CD8-positive, alpha-beta memory T cell (primary cell): ENCODE measurements at regions of chr15 and their contacts with region 1.

Region 1: DNA sequence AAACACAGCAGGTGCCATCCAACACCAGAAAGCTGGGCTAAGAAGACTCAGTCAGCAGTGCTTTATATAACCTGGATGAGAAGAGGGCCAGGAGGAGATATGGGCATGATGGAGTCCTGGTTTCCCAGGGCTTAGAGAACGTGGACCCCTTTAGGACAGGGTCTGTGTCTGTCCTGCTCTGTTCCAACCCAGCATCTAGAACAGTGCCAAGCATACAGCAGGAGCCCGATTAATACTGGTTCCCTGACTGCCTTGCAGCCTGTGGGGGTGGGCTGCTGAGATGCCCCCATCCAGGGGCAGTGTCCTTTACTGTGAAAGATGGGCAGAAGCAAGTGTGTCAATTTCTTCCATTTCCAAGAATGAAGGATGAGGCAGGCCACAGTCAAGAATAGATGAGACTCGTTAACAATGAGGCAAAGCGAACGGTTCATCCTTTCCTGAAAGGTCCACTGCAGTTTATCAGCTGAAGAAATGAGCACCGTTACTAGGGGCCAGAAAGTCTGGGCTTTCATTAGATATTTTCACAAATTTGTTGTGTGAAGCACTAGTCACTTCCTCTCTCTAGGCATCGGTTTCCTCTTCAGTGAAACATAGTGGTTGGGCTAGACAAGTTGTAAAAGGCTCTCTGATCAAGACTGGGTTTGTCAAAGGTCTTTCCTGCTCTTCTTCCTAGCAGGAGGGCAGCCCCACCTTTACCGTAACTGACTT is 72.0 kb upstream of the HERC1 start:
- DNase-seq: peak in 2 of 5 donors; percentile 25 to 32
- H3K4me3 ChIP-seq: no peak overlapping the region
- H3K4me3 Mint-ChIP-seq: peak overlapping the region in 6 of 7 donors; percentile 56 to 75 (median 60)
- H3K27ac ChIP-seq: no peak overlapping the region
- H3K27ac Mint-ChIP-seq: peak overlapping the region; percentile 77 to 97 (median 94)
- H3K4me1 ChIP-seq: peaks cover 25% of the 10 kb centered on the region
- H3K4me1 Mint-ChIP-seq: peaks cover 23 to 33% (median 29%) of the 10 kb centered on the region in 3 donors
- H3K27me3 ChIP-seq: no peaks in the 10 kb centered on the region
- H3K27me3 Mint-ChIP-seq: no peaks in the 10 kb centered on the region

Region 2: DNA sequence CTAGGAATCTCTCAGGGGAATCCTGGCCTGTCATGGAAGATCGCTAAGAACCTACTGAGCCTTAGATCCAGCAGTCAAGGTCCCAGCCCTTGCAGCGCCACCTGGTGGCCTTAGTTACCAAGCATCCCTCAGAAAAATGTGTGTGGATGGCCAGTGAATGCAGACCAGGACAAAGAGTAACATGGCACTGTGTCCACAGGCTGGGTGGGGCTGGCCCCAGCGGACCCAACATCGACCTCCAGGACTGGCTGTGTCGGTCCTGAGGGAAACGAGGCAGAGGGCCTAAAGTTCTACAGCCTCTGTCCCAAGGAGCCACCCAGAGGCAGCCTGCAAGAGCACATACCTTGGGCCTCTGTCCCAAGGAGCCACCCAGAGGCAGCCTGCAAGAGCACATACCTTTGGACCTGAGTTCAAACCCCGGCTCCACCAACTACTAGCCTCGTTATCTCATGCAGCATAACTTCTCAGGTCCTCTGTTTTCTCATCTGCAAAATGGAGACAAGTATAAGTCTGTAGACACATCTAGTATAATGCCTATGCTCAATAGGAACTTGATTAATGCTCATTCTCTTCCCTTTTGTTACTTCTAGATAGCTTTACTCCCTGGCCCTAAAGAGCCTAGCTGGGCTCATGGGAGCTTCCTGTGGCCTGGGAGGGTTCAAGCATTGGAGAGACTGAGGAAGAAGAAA is 14.5 kb before region 1 on chr15:
- CTCF ChIA-PET with region 1: interaction called, 10 read pairs
- POLR2A ChIA-PET with region 1: no interaction called
- DNase-seq: peak; percentile 51 to 75 (median 60)
- H3K4me3 ChIP-seq: peak overlapping the region; percentile 4
- H3K4me3 Mint-ChIP-seq: peak overlapping the region in 3 of 7 donors; percentile 56 to 71 (median 69)
- H3K27ac ChIP-seq: no peak overlapping the region
- H3K27ac Mint-ChIP-seq: peak overlapping the region; percentile 55 to 94 (median 90)
- H3K4me1 ChIP-seq: peaks cover 70% of the 10 kb centered on the region
- H3K4me1 Mint-ChIP-seq: peaks cover 51 to 60% (median 51%) of the 10 kb centered on the region in 3 donors
- H3K27me3 ChIP-seq: no peaks in the 10 kb centered on the region
- H3K27me3 Mint-ChIP-seq: no peaks in the 10 kb centered on the region